Calu3 (cell line): ENCODE measurements at regions of chr3 and their contacts with region 1.

Region 1: DNA sequence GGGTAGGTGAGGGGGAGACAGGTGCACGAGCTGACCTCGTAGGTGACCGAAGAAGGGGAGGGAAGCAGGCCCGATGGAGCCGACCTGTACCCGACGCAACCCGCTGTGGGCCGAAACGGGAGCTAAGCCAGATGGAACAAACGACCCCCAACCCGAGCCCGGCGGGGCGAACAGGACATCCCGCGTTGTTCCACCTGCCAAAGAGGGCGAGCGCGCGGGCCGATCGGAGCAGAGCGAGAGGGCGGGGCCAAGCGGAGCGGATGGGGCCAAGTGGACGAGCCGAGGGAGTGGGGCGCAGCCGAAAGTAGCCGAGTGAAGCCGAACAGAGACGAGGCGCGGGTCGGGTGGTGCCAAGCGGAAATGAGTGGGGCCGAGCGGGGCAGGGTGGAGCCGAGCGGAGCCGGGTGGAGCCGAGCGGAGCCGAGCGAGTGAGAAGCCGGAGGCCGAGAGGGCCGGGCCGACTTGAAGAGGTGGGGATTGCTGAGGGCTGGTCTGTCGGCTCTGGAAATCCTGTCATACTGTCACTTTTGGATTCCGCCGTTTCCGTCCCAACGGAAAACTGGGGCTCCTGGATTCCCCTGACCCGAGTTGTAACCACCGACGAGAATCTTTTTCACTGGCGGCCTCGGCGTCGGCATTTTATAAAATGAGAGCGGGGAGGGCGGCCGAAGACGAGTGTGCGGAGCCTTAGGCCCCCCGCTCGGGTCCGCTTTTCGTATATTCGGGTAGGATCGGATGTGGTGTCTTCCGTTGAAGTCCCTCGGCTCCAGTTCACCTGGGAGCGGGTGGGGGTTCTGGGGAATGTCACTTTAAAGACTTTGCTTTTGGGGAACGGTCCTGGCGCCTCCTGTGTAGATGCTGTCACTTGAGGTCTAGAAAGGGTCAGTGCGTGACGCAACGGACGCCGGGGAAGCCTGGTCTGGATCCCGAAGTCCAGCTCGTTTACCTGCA is 15.6 kb upstream of the WNT7A start:
- DNase-seq: peak; percentile 95
- H3K4me3 Mint-ChIP-seq: peak overlapping the region; percentile 84
- H3K27ac Mint-ChIP-seq: peak overlapping the region; percentile 36
- H3K4me1 Mint-ChIP-seq: peaks cover 11% of the 10 kb centered on the region
- H3K27me3 Mint-ChIP-seq: peaks cover 7% of the 10 kb centered on the region
- CTCF ChIP-seq: no peak

Region 2: GRCh38 chr3:13866041-13866965 is 29.1 kb before region 1 on chr3:
- CTCF ChIA-PET with region 1: no interaction called
- intact Hi-C with region 1: no loop called
- DNase-seq: no peak
- H3K4me3 Mint-ChIP-seq: no peak overlapping the region
- H3K27ac Mint-ChIP-seq: no peak overlapping the region
- H3K4me1 Mint-ChIP-seq: no peaks in the 10 kb centered on the region
- H3K27me3 Mint-ChIP-seq: peaks cover 33% of the 10 kb centered on the region
- CTCF ChIP-seq: no peak

Region 3: DNA sequence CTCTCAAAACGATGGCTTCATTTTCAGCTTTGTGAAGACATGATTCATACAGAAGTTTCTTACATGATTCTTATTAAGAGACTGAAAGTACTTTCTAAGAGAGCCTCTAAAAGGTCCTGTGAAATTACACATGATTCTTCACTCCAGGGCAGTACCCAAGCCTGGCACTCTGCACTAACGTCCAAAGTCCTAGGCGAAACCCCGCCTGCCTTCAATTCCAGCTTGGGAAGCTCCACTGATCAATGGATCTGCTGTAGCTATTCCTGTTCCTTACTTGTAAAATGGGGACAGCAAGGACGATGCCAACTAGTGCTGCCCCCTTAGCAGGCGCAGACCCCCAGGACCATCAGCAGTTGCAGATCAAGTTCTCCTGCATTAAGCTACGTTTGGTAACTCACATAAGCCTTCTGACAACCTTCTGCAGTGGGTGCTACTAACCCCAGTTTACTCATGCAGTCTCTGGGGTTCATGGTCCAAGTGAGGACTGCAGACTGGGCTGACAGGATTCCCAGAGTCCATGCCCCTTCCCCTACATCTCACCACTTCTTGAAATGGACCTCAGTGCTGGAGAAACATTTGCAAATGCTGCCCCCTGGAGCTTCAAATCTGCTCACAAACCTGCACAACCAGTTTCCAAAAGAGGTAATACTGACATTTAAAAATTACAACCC is 218.7 kb after region 1 on chr3:
- CTCF ChIA-PET with region 1: interaction called, 43 read pairs
- intact Hi-C with region 1: loop called (anchors 1 kb)
- DNase-seq: peak; percentile 43
- H3K4me3 Mint-ChIP-seq: no peak overlapping the region
- H3K27ac Mint-ChIP-seq: no peak overlapping the region
- H3K4me1 Mint-ChIP-seq: peaks cover 6% of the 10 kb centered on the region
- H3K27me3 Mint-ChIP-seq: no peaks in the 10 kb centered on the region
- CTCF ChIP-seq: peak; percentile 18

Region 4: DNA sequence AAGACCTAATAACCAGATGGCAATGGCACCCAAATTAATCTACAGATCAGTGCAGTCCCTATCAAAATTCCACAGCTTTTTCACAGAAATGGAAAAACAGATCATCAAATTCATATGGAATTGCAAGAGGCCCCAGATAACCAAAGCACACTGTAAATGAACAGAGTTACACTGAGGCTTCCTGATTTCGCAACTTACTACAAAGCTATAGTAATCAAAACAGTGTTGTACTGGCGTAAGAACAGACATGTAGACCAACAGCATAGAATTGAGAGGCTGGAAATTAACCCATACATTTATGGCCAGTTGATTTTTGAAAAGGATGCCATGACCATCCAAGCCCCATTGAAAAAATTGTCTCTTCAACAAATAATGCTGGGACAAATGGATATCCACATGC is 266.8 kb after region 1 on chr3:
- CTCF ChIA-PET with region 1: no interaction called
- intact Hi-C with region 1: no loop called
- DNase-seq: no peak
- H3K4me3 Mint-ChIP-seq: no peak overlapping the region
- H3K27ac Mint-ChIP-seq: no peak overlapping the region
- H3K4me1 Mint-ChIP-seq: no peaks in the 10 kb centered on the region
- H3K27me3 Mint-ChIP-seq: no peaks in the 10 kb centered on the region
- CTCF ChIP-seq: no peak